AG04450 (cell line): ENCODE measurements at regions of chr2 and their contacts with region 1.

Region 1: GRCh38 chr2:174632841-174633622 is 35.4 kb upstream of the WIPF1 start:
- DNase-seq: no peak
- H3K4me3 ChIP-seq: no peak overlapping the region
- H3K27ac ChIP-seq: no peak overlapping the region
- H3K27me3 ChIP-seq: no peaks in the 10 kb centered on the region
- CTCF ChIP-seq: no peak

Region 2: DNA sequence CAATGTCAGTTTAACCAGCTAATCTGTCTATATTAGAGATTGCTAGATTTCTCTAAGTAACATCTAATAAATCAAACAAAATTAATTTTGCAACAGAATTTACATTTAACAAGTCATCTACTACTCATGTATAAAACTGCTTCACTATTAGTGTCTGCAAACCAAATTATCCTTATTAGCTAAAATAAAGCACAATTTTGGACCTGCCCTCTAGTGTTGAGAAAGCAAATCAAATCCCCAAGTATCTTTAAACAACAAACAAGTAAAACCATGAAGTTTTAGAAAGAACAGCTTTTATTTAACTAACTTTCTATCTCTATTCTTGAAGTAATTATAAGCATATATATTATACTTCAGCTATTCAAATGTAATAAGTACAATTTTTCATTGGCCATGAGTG is 554.8 kb before region 1 on chr2:
- CTCF ChIA-PET with region 1: no interaction called
- POLR2A ChIA-PET with region 1: no interaction called
- DNase-seq: no peak
- H3K4me3 ChIP-seq: no peak overlapping the region
- H3K27ac ChIP-seq: no peak overlapping the region
- H3K27me3 ChIP-seq: no peaks in the 10 kb centered on the region
- CTCF ChIP-seq: peak; percentile 59

Region 3: GRCh38 chr2:174615871-174616436 is 17.1 kb before region 1 on chr2:
- CTCF ChIA-PET with region 1: no interaction called
- POLR2A ChIA-PET with region 1: interaction called, 13 read pairs
- DNase-seq: no peak
- H3K4me3 ChIP-seq: no peak overlapping the region
- H3K27ac ChIP-seq: no peak overlapping the region
- H3K27me3 ChIP-seq: no peaks in the 10 kb centered on the region
- CTCF ChIP-seq: no peak